Calu3 (cell line): ENCODE measurements at regions of chr15 and their contacts with region 1.

Region 1: GRCh38 chr15:40367686-40368611 is 9.9 kb downstream of the DISP2 start:
- DNase-seq: peak; percentile 83
- H3K4me3 Mint-ChIP-seq: peak overlapping the region; percentile 59
- H3K27ac Mint-ChIP-seq: peak overlapping the region; percentile 9
- H3K4me1 Mint-ChIP-seq: peaks cover 11% of the 10 kb centered on the region
- H3K27me3 Mint-ChIP-seq: no peaks in the 10 kb centered on the region
- CTCF ChIP-seq: peak; percentile 52

Region 2: GRCh38 chr15:40282144-40282868 is 85.6 kb before region 1 on chr15:
- CTCF ChIA-PET with region 1: interaction called, 14 read pairs
- intact Hi-C with region 1: no loop called
- DNase-seq: peak; percentile 59
- H3K4me3 Mint-ChIP-seq: peak overlapping the region; percentile 57
- H3K27ac Mint-ChIP-seq: no peak overlapping the region
- H3K4me1 Mint-ChIP-seq: no peaks in the 10 kb centered on the region
- H3K27me3 Mint-ChIP-seq: no peaks in the 10 kb centered on the region
- CTCF ChIP-seq: peak; percentile 65

Region 3: GRCh38 chr15:40421246-40422157 is 53.6 kb after region 1 on chr15:
- CTCF ChIA-PET with region 1: no interaction called
- intact Hi-C with region 1: loop called (anchors 1 kb)
- DNase-seq: peak; percentile 78
- H3K4me3 Mint-ChIP-seq: no peak overlapping the region
- H3K27ac Mint-ChIP-seq: no peak overlapping the region
- H3K4me1 Mint-ChIP-seq: peaks cover 10% of the 10 kb centered on the region
- H3K27me3 Mint-ChIP-seq: no peaks in the 10 kb centered on the region
- CTCF ChIP-seq: peak; percentile 73